ENCODE measurements at regions of chr11 and their contacts with region 1.

Region 1: DNA sequence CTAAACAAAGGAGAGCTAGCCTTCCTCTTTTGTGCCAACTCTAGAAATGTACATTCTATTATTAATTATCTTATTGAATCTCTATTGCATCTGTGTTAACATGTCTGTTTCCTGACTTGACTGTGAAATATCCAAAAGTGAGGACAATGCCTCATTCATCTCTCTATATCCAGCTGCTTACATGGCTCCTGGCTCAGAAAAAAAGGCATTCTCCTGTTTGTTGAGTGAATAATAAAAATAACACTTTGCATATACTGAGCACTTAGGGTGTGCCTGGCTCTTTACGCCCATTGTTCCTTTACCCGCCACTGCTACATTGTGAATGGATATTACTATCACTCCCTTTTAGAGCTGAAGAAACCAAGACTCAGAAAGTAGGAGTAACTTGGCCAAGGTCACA is 19.9 kb downstream of the NRXN2 start:
- DNase-seq: no peak
- ATAC-seq: no peak
- H3K4me3 Mint-ChIP-seq: no peak overlapping the region
- H3K27ac Mint-ChIP-seq: no peak overlapping the region
- H3K4me1 Mint-ChIP-seq: no peaks in the 10 kb centered on the region
- H3K27me3 Mint-ChIP-seq: peaks cover 32% of the 10 kb centered on the region

Region 2: GRCh38 chr11:64688534-64688982 is 14.5 kb before region 1 on chr11:
- CTCF ChIA-PET with region 1: interaction called, 42 read pairs
- DNase-seq: peak; percentile 93
- ATAC-seq: peak; percentile 98
- H3K4me3 Mint-ChIP-seq: peak overlapping the region; percentile 45
- H3K27ac Mint-ChIP-seq: no peak overlapping the region
- H3K4me1 Mint-ChIP-seq: peaks cover 23% of the 10 kb centered on the region
- H3K27me3 Mint-ChIP-seq: peaks cover 31% of the 10 kb centered on the region